ENCODE measurements at regions of chr6 and their contacts with region 1.

Region 1: GRCh38 chr6:154202339-154202738 is 154.3 kb downstream of the IPCEF1 start:
- H3K4me3 Mint-ChIP-seq: peak overlapping the region; percentile 28
- H3K27ac Mint-ChIP-seq: peak overlapping the region; percentile 98
- H3K4me1 Mint-ChIP-seq: peaks cover 87% of the 10 kb centered on the region
- H3K27me3 Mint-ChIP-seq: no peaks in the 10 kb centered on the region

Region 2: DNA sequence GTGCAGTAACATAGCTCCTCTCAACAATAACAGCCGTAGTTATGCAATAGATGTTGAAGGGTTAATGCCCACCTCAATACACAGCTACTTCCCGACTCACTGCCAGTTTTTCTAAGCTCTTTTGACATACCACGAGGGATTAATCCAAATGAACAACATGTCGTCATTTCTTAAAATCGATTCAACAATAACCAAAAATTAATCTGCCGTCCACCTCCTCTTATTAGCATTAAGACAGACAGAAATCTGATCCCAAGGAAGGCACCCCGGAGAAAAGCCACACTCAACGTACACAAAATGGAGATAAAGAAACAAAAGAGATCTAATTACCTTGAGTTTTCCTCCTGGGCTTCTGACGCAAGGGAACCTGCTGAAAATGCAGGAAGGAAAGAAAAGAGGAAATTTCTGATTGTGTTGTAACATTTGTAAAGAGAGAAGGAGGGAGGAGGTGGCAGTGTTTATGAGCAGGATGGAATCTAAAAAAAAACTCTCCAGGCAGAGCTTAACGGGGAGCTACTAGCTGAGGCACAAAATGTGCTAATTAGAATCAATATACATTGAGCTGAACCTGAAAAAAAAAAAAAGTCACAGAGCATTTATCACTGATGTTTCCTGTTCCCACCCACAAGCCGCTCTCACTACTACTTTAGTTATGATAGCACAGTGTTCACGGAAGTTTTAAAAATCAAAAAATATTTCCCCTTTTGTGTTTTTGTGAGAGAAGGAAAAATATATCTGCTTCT is 45.0 kb after region 1 on chr6:
- intact Hi-C with region 1: loop called (anchors 5 kb)
- H3K4me3 Mint-ChIP-seq: peak overlapping the region; percentile 88
- H3K27ac Mint-ChIP-seq: peak overlapping the region; percentile 92
- H3K4me1 Mint-ChIP-seq: peaks cover 83% of the 10 kb centered on the region
- H3K27me3 Mint-ChIP-seq: no peaks in the 10 kb centered on the region

Measured in dendritic cell treated with granulocyte-macrophage colony-stimulating factor and Interleukin-4, amounts not matched to agents 40 ng/mL and 50 ng/mL, for 4 days (primary cell).